Gastrocnemius medialis (tissue), 4 donors: ENCODE measurements at regions of chr3 and their contacts with region 1.

Region 1: GRCh38 chr3:130892759-130893375 is 1.0 kb upstream of the ATP2C1 start:
- DNase-seq: peak; percentile 61 to 65
- ATAC-seq: peak; percentile 78 to 80
- H3K4me3 ChIP-seq: peak overlapping the region; percentile 84 to 96 (median 92)
- H3K27ac ChIP-seq: peak overlapping the region; percentile 91 to 98 (median 96)
- H3K4me1 ChIP-seq: peaks cover 9 to 22% of the 10 kb centered on the region in 2 donors
- H3K27me3 ChIP-seq: no peaks in the 10 kb centered on the region
- CTCF ChIP-seq: peak; percentile 82 to 89 (median 87)
- POLR2A ChIP-seq: no peak

Region 2: GRCh38 chr3:129911261-129911861 is 981.5 kb before region 1 on chr3:
- in situ Hi-C with region 1: no loop called
- intact Hi-C with region 1: no loop called
- DNase-seq: no peak
- ATAC-seq: peak in 1 of 2 donors; percentile 30
- H3K4me3 ChIP-seq: no peak overlapping the region
- H3K27ac ChIP-seq: no peak overlapping the region
- H3K4me1 ChIP-seq: no peaks in the 10 kb centered on the region
- H3K27me3 ChIP-seq: no peaks in the 10 kb centered on the region
- CTCF ChIP-seq: no peak
- POLR2A ChIP-seq: no peak

Region 3: GRCh38 chr3:130759699-130760338 is 133.0 kb before region 1 on chr3:
- in situ Hi-C with region 1: loop called (anchors 5 to 25 kb)
- intact Hi-C with region 1: loop called (anchors 1 kb)
- DNase-seq: peak; percentile 25 to 53
- ATAC-seq: peak; percentile 93 to 94
- H3K4me3 ChIP-seq: no peak overlapping the region
- H3K27ac ChIP-seq: no peak overlapping the region
- H3K4me1 ChIP-seq: no peaks in the 10 kb centered on the region
- H3K27me3 ChIP-seq: no peaks in the 10 kb centered on the region
- CTCF ChIP-seq: peak; percentile 70 to 91 (median 82)
- POLR2A ChIP-seq: no peak

Region 4: DNA sequence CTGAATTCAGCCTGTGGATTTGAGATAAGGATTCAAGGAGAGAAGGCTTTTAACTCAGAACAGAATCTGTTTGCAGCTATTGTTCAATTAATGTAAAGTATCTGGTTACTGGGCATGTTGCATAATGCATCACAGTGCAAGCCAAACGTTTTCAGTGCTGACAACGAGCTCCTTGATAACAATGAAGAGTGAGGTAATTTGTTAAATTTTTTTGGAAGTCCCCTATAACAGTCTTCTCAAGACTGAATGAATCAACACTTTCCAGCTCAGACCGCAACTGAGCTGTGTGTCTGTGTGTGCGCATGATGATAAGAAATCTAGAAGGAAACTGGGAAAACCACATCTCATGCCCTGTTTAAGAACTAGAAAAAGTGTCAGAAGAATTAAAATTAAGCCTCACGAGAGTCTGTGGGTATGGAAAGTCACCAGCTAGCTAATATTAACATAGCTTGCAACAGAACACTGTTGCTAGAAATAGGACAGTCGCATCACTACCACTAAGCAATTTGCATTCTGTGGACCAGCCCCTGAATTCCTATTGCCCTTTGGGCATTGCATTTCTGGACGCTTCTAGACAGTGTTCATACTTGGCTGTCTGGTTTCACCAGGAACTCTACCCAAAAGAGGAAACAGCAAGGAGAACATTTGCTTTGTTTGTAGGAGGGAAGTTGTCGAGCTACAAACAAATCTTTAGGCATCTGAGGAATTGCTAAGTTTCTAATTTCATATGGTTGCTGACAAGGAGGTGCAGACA is 42.6 kb before region 1 on chr3:
- in situ Hi-C with region 1: no loop called
- intact Hi-C with region 1: loop called (anchors 2 kb)
- DNase-seq: peak; percentile 29 to 41
- ATAC-seq: peak; percentile 73 to 75
- H3K4me3 ChIP-seq: peak overlapping the region; percentile 48 to 63 (median 52)
- H3K27ac ChIP-seq: peak overlapping the region; percentile 86 to 89 (median 86)
- H3K4me1 ChIP-seq: peaks cover 57 to 66% of the 10 kb centered on the region in 2 donors
- H3K27me3 ChIP-seq: no peaks in the 10 kb centered on the region
- CTCF ChIP-seq: no peak
- POLR2A ChIP-seq: peak; percentile 33 to 40

Region 5: DNA sequence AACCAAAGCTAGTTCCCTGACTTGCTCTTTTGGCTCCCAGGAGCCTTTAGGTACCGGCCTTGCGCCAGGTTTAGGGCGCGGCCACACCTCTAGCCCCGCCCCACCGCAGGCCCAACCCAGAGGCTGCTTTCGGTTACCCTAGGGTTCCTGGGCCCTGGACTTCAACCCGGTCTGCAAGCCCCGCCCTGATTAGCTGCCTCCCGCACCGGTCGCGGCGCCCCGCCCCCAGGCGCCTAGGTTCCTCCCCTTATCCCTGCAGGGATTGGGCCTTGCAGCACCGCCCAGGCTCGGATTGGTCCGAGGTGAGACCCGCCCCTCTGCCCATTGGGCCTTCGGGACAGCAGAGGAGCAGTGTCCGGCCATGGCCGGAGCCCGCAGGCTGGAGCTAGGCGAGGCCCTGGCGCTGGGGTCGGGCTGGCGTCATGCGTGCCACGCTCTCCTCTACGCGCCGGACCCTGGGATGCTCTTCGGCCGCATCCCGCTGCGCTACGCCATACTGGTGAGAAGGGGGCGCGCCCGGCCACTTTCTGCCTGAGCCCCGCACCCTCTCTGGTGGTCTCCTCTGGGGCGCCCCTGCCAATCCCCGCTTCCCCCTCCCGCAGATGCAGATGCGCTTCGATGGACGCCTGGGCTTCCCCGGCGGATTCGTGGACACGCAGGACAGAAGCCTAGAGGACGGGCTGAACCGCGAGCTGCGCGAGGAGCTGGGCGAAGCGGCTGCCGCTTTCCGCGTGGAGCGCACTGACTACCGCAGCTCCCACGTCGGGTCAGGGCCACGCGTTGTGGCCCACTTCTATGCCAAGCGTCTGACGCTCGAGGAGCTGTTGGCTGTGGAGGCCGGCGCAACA is 488.8 kb after region 1 on chr3 and contains the start of gene NUDT16:
- in situ Hi-C with region 1: no loop called
- intact Hi-C with region 1: loop called (anchors 10 kb)
- DNase-seq: peak; percentile 100
- ATAC-seq: peak; percentile 93 to 94
- H3K4me3 ChIP-seq: peak within 1 kb of the TSS; percentile 83 to 97 (median 92)
- H3K27ac ChIP-seq: peak within 1 kb of the TSS; percentile 90 to 94 (median 92)
- H3K4me1 ChIP-seq: peaks cover 28 to 43% of the 10 kb centered on the region in 2 donors
- H3K27me3 ChIP-seq: no peaks in the 10 kb centered on the region
- CTCF ChIP-seq: no peak
- POLR2A ChIP-seq: peak; percentile 82 to 87
- total RNA-seq, gene NUDT16: 10.0 to 18.3 (median 14.4) TPM